ENCODE measurements at regions of chr15 and their contacts with region 1.

Region 1: GRCh38 chr15:60179786-60180391 is 175.8 kb downstream of the FOXB1 start:
- DNase-seq: peak; percentile 58
- H3K4me3 Mint-ChIP-seq: no peak overlapping the region
- H3K27ac Mint-ChIP-seq: no peak overlapping the region
- H3K4me1 Mint-ChIP-seq: no peaks in the 10 kb centered on the region
- H3K27me3 Mint-ChIP-seq: no peaks in the 10 kb centered on the region
- CTCF ChIP-seq: peak; percentile 69

Region 2: GRCh38 chr15:59725172-59725486 is 454.8 kb before region 1 on chr15:
- CTCF ChIA-PET with region 1: interaction called, 12 read pairs
- POLR2A ChIA-PET with region 1: no interaction called
- intact Hi-C with region 1: loop called (anchors 2 kb)
- DNase-seq: no peak
- H3K4me3 Mint-ChIP-seq: no peak overlapping the region
- H3K27ac Mint-ChIP-seq: no peak overlapping the region
- H3K4me1 Mint-ChIP-seq: no peaks in the 10 kb centered on the region
- H3K27me3 Mint-ChIP-seq: peaks cover 13% of the 10 kb centered on the region
- CTCF ChIP-seq: no peak

Region 3: DNA sequence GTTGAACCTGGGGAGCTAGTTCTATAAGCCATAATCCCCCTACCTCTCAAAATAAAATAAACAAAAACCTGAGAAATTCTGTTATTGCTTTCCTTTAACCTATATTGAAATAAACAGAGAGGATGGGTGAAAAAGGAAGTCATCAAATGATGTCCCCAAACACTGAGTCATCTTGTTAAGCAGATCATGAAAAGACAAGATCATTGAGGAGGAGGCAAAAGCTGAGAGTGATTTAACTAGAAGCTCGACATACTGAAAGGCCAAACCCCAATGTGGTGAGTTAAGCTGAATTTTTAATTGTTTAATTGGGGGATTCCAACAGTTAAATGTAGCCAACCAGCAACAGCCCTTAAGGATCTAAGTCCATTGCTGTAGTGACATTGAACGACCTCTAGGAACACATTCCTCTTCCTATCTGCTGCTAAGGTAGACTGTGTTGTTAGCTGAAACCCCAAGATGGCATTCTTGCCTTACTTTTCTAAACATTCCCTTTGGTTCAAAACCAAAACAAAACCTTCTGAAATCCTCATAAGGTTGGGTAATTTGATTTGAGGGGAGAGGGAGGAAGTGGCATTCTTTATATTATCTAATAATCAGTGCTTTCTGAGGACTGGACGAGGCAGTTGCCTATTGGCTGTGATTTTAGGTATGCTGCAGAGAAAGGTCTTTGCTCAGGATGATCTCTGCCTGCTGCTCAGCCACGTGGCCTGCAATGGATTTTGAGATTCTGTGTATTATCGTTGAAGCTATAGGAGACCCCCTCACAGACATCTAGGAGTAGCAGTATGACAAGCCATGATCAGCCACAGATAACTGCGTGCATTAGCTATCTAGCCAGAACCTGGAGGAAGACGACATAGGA is 428.1 kb before region 1 on chr15:
- CTCF ChIA-PET with region 1: interaction called, 12 read pairs
- POLR2A ChIA-PET with region 1: no interaction called
- intact Hi-C with region 1: loop called (anchors 1 kb)
- DNase-seq: peak; percentile 54
- H3K4me3 Mint-ChIP-seq: no peak overlapping the region
- H3K27ac Mint-ChIP-seq: no peak overlapping the region
- H3K4me1 Mint-ChIP-seq: no peaks in the 10 kb centered on the region
- H3K27me3 Mint-ChIP-seq: peaks cover 13% of the 10 kb centered on the region
- CTCF ChIP-seq: peak; percentile 73

Region 4: DNA sequence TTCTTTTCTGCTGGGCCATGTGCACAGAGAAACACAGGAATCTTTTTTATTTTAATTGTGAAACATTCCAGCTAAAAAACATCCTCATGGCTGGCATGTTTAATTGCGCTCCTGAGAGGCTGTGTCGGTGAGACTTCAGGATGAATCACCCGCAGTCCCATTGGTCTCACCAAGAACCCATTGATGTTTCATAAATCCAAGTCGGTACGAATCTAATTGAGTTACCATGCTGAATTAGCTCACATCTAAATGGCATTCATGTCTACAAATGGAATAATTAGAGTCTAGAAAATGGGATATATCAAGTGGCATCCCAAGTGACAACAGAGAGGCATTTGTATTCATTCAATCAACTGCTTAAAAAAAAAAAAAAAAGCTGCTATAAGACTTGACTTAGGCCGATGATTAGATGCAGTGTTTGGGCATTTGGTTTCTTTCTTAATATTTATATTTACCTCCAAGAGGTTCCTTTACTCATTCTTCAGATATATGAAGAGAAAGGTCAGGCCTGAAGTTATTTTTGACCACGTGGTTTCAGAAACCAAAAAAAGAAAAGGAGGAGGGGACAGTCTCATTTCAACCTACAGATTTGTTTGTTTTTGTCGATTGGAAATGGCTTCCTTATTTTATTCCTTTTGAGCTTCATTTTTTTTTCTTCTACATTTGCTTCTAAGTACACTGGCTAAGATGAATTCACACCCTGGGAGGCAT is 254.9 kb before region 1 on chr15:
- CTCF ChIA-PET with region 1: interaction called, 11 read pairs
- POLR2A ChIA-PET with region 1: no interaction called
- intact Hi-C with region 1: no loop called
- DNase-seq: no peak
- H3K4me3 Mint-ChIP-seq: no peak overlapping the region
- H3K27ac Mint-ChIP-seq: no peak overlapping the region
- H3K4me1 Mint-ChIP-seq: peaks cover 3% of the 10 kb centered on the region
- H3K27me3 Mint-ChIP-seq: no peaks in the 10 kb centered on the region
- CTCF ChIP-seq: no peak

Region 5: GRCh38 chr15:60128000-60128376 is 51.9 kb before region 1 on chr15:
- CTCF ChIA-PET with region 1: interaction called, 5 read pairs
- POLR2A ChIA-PET with region 1: no interaction called
- intact Hi-C with region 1: loop called (anchors 1 kb)
- DNase-seq: no peak
- H3K4me3 Mint-ChIP-seq: peak overlapping the region; percentile 85
- H3K27ac Mint-ChIP-seq: peak overlapping the region; percentile 94
- H3K4me1 Mint-ChIP-seq: peaks cover 18% of the 10 kb centered on the region
- H3K27me3 Mint-ChIP-seq: no peaks in the 10 kb centered on the region
- CTCF ChIP-seq: no peak

Region 6: DNA sequence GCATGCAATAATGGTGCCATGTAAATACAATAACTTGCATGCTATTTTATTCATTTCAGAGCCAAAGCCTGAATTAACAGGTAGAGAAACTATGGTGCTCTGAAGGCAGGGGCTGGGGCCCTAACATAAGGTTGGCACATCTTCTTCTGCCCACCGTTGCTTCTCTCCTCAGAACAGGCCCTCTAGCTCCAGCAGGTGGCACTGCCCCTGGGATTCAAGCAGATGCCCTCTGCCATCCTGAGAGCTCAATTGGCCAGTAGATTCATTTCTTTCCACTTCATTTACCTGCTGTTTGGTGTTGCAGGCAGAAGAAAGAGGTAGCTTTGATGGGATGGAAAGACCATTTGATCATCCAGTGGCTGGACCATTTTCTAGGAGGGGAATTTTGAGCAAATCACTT is 45.3 kb before region 1 on chr15:
- CTCF ChIA-PET with region 1: interaction called, 10 read pairs
- POLR2A ChIA-PET with region 1: no interaction called
- intact Hi-C with region 1: no loop called
- DNase-seq: peak; percentile 24
- H3K4me3 Mint-ChIP-seq: no peak overlapping the region
- H3K27ac Mint-ChIP-seq: no peak overlapping the region
- H3K4me1 Mint-ChIP-seq: peaks cover 4% of the 10 kb centered on the region
- H3K27me3 Mint-ChIP-seq: no peaks in the 10 kb centered on the region
- CTCF ChIP-seq: peak; percentile 41

Region 7: GRCh38 chr15:60154764-60155325 is 25.0 kb before region 1 on chr15:
- CTCF ChIA-PET with region 1: interaction called, 10 read pairs
- POLR2A ChIA-PET with region 1: no interaction called
- intact Hi-C with region 1: no loop called
- DNase-seq: no peak
- H3K4me3 Mint-ChIP-seq: no peak overlapping the region
- H3K27ac Mint-ChIP-seq: no peak overlapping the region
- H3K4me1 Mint-ChIP-seq: peaks cover 10% of the 10 kb centered on the region
- H3K27me3 Mint-ChIP-seq: no peaks in the 10 kb centered on the region
- CTCF ChIP-seq: no peak

Region 8: GRCh38 chr15:60605879-60606304 is 426.0 kb after region 1 on chr15:
- CTCF ChIA-PET with region 1: no interaction called
- POLR2A ChIA-PET with region 1: no interaction called
- intact Hi-C with region 1: no loop called
- DNase-seq: no peak
- H3K4me3 Mint-ChIP-seq: no peak overlapping the region
- H3K27ac Mint-ChIP-seq: no peak overlapping the region
- H3K4me1 Mint-ChIP-seq: no peaks in the 10 kb centered on the region
- H3K27me3 Mint-ChIP-seq: peaks cover 10% of the 10 kb centered on the region
- CTCF ChIP-seq: no peak